MCF 10A (cell line): ENCODE measurements at regions of chr12 and their contacts with region 1.

Region 1: DNA sequence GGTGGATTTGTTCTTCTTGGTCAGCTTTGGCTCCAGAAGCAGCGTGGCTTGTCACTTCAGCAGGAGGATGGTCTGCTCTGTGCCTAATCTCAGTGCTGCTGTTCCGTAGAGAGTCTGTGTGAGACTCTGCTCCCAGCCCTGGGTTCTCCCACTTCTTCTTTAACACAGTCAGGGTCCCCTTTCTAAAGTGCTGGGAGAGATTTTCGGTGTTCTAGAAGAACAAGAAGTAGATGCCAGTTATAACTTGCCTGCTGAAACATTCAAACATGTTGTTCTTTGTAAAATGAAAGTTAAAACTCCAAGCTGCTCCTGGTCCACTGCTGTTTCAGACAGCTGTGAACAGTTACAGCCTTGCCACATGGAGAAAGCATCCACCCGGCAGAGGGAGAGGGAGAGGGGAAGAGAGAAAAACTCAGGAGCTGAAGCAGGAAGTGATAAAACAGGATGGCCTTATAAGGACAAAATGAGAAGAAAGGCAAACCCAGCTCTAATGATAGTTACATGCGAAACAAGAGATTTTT is 55.2 kb upstream of the CERS5 start:
- DNase-seq: peak; percentile 85
- H3K4me3 Mint-ChIP-seq: no peak overlapping the region
- H3K27ac Mint-ChIP-seq: no peak overlapping the region
- H3K4me1 Mint-ChIP-seq: peaks cover 18% of the 10 kb centered on the region
- H3K27me3 Mint-ChIP-seq: no peaks in the 10 kb centered on the region
- CTCF ChIP-seq: no peak

Region 2: GRCh38 chr12:50167041-50167828 is 55.1 kb before region 1 on chr12 and contains the start of gene CERS5:
- CTCF ChIA-PET with region 1: interaction called, 3 read pairs
- POLR2A ChIA-PET with region 1: interaction called, 14 read pairs
- intact Hi-C with region 1: no loop called
- DNase-seq: peak; percentile 99
- H3K4me3 Mint-ChIP-seq: peak within 1 kb of the TSS; percentile 79
- H3K27ac Mint-ChIP-seq: peak within 1 kb of the TSS; percentile 79
- H3K4me1 Mint-ChIP-seq: peaks cover 12% of the 10 kb centered on the region
- H3K27me3 Mint-ChIP-seq: no peaks in the 10 kb centered on the region
- CTCF ChIP-seq: peak; percentile 9
- total RNA-seq, gene CERS5: 56.8 and 58.1 TPM in 2 replicates

Region 3: GRCh38 chr12:50211392-50212070 is 10.8 kb before region 1 on chr12:
- CTCF ChIA-PET with region 1: interaction called, 14 read pairs
- POLR2A ChIA-PET with region 1: interaction called, 69 read pairs
- intact Hi-C with region 1: no loop called
- DNase-seq: no peak
- H3K4me3 Mint-ChIP-seq: no peak overlapping the region
- H3K27ac Mint-ChIP-seq: peak overlapping the region; percentile 92
- H3K4me1 Mint-ChIP-seq: peaks cover 23% of the 10 kb centered on the region
- H3K27me3 Mint-ChIP-seq: no peaks in the 10 kb centered on the region
- CTCF ChIP-seq: no peak

Region 4: GRCh38 chr12:50246873-50247612 is 24.7 kb after region 1 on chr12:
- CTCF ChIA-PET with region 1: interaction called, 5 read pairs
- POLR2A ChIA-PET with region 1: interaction called, 55 read pairs
- intact Hi-C with region 1: loop called (anchors 1 kb)
- DNase-seq: peak; percentile 98
- H3K4me3 Mint-ChIP-seq: peak overlapping the region; percentile 30
- H3K27ac Mint-ChIP-seq: peak overlapping the region; percentile 53
- H3K4me1 Mint-ChIP-seq: peaks cover 15% of the 10 kb centered on the region
- H3K27me3 Mint-ChIP-seq: no peaks in the 10 kb centered on the region
- CTCF ChIP-seq: no peak

Region 5: DNA sequence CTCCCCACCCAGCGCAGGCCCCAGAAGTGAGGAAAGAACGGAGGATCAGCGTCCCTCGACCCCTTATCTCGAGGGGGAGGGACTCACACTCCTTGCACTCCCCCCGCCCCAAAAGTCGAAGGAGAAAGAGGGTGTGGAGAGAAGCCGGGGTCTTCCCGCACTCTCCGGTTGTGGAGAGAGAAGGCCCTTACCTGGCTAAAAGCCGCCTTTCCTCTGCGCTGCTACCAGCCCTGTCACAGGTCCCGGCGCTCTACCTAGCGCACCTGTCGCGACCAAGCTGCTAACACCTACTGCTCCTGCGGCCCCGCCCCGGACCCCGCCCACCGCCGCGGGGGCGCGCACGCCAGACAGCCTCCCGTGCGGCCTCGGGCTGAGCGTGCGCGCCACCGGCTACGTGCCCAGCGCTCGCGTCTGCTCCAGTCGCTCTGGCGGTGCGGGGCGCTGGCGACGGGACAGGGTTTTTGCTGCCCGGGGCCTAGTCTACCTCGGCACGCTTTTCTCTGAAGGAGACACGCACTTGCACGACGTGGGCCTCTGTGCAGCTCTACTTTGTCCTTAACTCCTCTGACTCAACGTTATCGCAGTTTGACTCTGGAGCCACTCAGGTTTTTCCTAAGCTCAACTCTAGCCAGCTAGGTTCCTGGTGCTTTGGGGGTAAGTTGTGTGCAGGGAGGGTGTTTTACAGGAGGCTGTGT is 61.0 kb after region 1 on chr12 and contains the start of gene LIMA1:
- CTCF ChIA-PET with region 1: interaction called, 5 read pairs
- POLR2A ChIA-PET with region 1: interaction called, 73 read pairs
- intact Hi-C with region 1: loop called (anchors 2 kb)
- DNase-seq: peak; percentile 87
- H3K4me3 Mint-ChIP-seq: peak within 1 kb of the TSS; percentile 79
- H3K27ac Mint-ChIP-seq: peak within 1 kb of the TSS; percentile 62
- H3K4me1 Mint-ChIP-seq: peaks cover 6% of the 10 kb centered on the region
- H3K27me3 Mint-ChIP-seq: no peaks in the 10 kb centered on the region
- CTCF ChIP-seq: no peak
- total RNA-seq, gene LIMA1: 65.5 and 86.0 TPM in 2 replicates

Region 6: DNA sequence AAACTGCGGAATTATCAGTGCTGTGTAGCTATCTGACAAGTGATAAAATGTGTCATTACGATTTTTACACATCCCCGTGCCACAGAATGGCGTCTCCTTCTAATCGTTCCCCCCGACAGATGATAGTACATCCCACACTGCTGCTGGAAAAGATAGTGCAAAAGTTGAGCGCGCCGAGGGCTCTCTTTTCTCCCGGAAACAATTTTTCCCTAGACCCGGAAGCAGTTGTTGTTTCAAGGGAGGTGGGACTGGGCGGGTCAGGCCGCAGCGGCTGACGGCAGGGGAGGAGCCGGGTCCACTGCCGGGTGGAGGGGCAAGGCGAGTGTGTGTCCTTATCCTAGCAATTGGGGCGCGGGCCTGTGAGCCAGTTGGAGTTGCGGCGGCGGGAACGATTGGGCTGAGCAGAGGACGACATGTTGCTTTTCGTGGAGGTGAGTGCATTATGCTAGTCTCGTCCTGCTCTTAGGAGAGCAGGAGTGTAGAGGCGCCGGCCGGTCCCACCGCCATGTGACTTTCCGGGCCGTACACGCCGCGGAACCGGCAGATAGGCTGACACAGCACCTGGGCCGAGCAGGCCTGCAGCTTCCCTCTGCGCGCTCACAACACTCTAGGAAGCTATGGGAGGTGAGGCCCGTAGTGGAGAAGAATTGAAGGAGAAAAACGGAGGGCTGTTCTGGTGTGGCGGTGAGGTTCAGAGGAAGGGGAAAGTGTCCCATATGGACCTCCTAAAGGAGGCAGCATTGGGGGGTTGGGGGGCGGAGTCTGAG is 178.4 kb after region 1 on chr12 and contains the start of gene LARP4:
- CTCF ChIA-PET with region 1: interaction called, 3 read pairs
- POLR2A ChIA-PET with region 1: interaction called, 63 read pairs
- intact Hi-C with region 1: loop called (anchors 1 kb)
- DNase-seq: peak; percentile 96
- H3K4me3 Mint-ChIP-seq: peak within 1 kb of the TSS; percentile 97
- H3K27ac Mint-ChIP-seq: peak within 1 kb of the TSS; percentile 89
- H3K4me1 Mint-ChIP-seq: peaks cover 7% of the 10 kb centered on the region
- H3K27me3 Mint-ChIP-seq: no peaks in the 10 kb centered on the region
- CTCF ChIP-seq: no peak
- total RNA-seq, gene LARP4: 73.6 and 78.8 TPM in 2 replicates